CD4-positive, alpha-beta memory T cell (primary cell): ENCODE measurements at regions of chr11 and their contacts with region 1.

Region 1: GRCh38 chr11:83249972-83250593 is 36.1 kb downstream of the CCDC90B start:
- DNase-seq: peak in 4 of 5 donors; percentile 28 to 43 (median 38)
- H3K4me3 ChIP-seq: no peak overlapping the region
- H3K4me3 Mint-ChIP-seq: no peak overlapping the region
- H3K27ac ChIP-seq: no peak overlapping the region
- H3K27ac Mint-ChIP-seq: no peak overlapping the region
- H3K4me1 ChIP-seq: no peaks in the 10 kb centered on the region
- H3K4me1 Mint-ChIP-seq: peaks cover 0 to 4% (median 2%) of the 10 kb centered on the region in 4 donors
- H3K27me3 ChIP-seq: no peaks in the 10 kb centered on the region
- H3K27me3 Mint-ChIP-seq: no peaks in the 10 kb centered on the region

Region 2: DNA sequence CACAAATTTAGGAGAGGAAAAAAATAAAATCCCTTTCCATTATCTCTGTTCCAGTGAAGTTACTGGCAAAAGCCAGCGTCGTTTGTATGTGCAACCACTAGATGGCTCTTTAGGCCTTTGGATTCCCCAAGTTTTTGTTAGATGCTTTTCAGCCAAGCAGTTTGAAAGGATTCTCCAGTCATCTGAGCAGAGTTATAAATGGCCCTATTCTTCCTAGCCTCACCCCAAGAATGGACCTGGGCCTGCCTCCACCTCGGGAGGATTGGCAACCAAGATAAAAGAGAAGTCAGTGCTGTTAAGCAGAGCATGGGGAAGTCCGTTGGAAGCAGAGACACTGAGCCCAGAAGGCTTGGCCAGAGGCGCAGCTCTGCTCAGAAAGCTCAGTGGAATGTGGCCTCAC is 531.8 kb before region 1 on chr11:
- CTCF ChIA-PET with region 1: interaction called, 5 read pairs
- POLR2A ChIA-PET with region 1: no interaction called
- intact Hi-C with region 1: loop called (anchors 1 kb)
- DNase-seq: peak in 2 of 5 donors; percentile 15 to 29
- H3K4me3 ChIP-seq: no peak overlapping the region
- H3K4me3 Mint-ChIP-seq: no peak overlapping the region
- H3K27ac ChIP-seq: no peak overlapping the region
- H3K27ac Mint-ChIP-seq: no peak overlapping the region
- H3K4me1 ChIP-seq: no peaks in the 10 kb centered on the region
- H3K4me1 Mint-ChIP-seq: no peaks in the 10 kb centered on the region
- H3K27me3 ChIP-seq: no peaks in the 10 kb centered on the region
- H3K27me3 Mint-ChIP-seq: peaks cover under 1 to 2% of the 10 kb centered on the region in 2 donors

Region 3: DNA sequence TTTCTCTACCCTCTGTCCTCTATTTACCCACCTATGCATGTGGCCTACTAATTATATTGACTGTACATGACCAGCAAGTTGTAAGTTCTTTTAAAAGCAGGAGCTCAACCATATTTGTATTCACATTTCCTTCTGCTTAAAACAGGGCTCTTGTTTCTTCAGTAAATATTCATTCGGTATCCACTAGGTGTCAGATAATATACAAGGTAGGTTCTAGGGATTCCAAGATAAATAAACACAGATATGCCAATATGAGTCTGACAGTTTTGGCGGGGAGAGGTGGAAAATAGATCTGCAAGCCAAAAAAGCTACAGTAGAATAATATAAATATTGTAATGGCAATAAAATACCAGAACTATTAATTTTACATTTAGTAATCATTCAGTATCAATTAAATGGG is 163.0 kb before region 1 on chr11:
- CTCF ChIA-PET with region 1: interaction called, 8 read pairs
- POLR2A ChIA-PET with region 1: no interaction called
- intact Hi-C with region 1: loop called (anchors 1 kb)
- DNase-seq: no peak
- H3K4me3 ChIP-seq: no peak overlapping the region
- H3K4me3 Mint-ChIP-seq: no peak overlapping the region
- H3K27ac ChIP-seq: no peak overlapping the region
- H3K27ac Mint-ChIP-seq: peak overlapping the region in 2 of 7 donors; percentile 32 to 58
- H3K4me1 ChIP-seq: no peaks in the 10 kb centered on the region
- H3K4me1 Mint-ChIP-seq: peaks cover 0 to 13% (median 11%) of the 10 kb centered on the region in 4 donors
- H3K27me3 ChIP-seq: no peaks in the 10 kb centered on the region
- H3K27me3 Mint-ChIP-seq: no peaks in the 10 kb centered on the region

Region 4: GRCh38 chr11:83235825-83236224 is 14.3 kb before region 1 on chr11:
- CTCF ChIA-PET with region 1: interaction called, 10 read pairs
- POLR2A ChIA-PET with region 1: no interaction called
- intact Hi-C with region 1: no loop called
- DNase-seq: no peak
- H3K4me3 ChIP-seq: no peak overlapping the region
- H3K4me3 Mint-ChIP-seq: no peak overlapping the region
- H3K27ac ChIP-seq: no peak overlapping the region
- H3K27ac Mint-ChIP-seq: no peak overlapping the region
- H3K4me1 ChIP-seq: no peaks in the 10 kb centered on the region
- H3K4me1 Mint-ChIP-seq: no peaks in the 10 kb centered on the region
- H3K27me3 ChIP-seq: no peaks in the 10 kb centered on the region
- H3K27me3 Mint-ChIP-seq: no peaks in the 10 kb centered on the region

Region 5: DNA sequence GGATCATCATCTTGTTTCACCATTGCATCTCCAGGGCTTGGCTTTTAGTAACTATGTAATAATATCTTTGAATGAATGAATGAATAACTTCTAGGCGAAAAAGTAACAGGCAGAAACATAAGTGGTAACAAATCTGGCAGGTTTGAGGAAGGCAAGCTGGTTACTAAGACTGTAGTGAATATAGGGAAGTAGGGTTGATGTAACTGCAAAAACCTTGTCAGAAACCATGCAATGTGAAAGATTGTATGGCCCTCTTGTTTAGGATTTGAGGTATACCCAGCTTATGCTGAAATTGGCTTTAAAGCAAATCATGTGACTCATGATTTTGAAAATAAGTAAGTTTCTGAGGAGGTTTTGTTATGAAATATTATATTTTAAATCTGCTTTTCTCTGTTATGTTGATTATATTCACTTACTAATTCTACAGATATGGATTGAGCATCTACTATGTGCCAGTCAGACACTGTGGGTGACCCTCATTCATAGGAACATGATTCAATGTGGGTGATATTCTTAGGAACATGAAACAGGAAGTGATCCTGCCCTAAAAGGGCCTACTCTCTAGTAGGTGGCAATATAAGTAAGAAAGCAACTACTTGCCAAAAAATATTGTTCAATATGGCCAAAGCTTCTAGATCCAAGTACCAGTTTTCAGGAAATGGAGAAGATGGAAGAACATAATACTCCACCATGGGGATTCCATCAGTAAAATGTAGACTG is 151.6 kb after region 1 on chr11:
- CTCF ChIA-PET with region 1: no interaction called
- POLR2A ChIA-PET with region 1: no interaction called
- intact Hi-C with region 1: no loop called
- DNase-seq: no peak
- H3K4me3 ChIP-seq: no peak overlapping the region
- H3K4me3 Mint-ChIP-seq: no peak overlapping the region
- H3K27ac ChIP-seq: no peak overlapping the region
- H3K27ac Mint-ChIP-seq: no peak overlapping the region
- H3K4me1 ChIP-seq: no peaks in the 10 kb centered on the region
- H3K4me1 Mint-ChIP-seq: no peaks in the 10 kb centered on the region
- H3K27me3 ChIP-seq: no peaks in the 10 kb centered on the region
- H3K27me3 Mint-ChIP-seq: peaks cover 0 to 2% of the 10 kb centered on the region in 2 donors